Heart right ventricle (tissue), 16 donors: ENCODE measurements at regions of chr3 and their contacts with region 1.

Region 1: GRCh38 chr3:194134757-194135528 is 1.0 kb upstream of the HES1 start:
- DNase-seq: peak; percentile 93 to 96
- ATAC-seq: peak; percentile 61 to 83 (median 68)
- H3K4me3 ChIP-seq: peak overlapping the region; percentile 39 to 94 (median 69)
- H3K27ac ChIP-seq: peak overlapping the region; percentile 94 to 99 (median 96)
- H3K4me1 ChIP-seq: peaks cover 7 to 80% (median 60%) of the 10 kb centered on the region in 9 donors
- H3K27me3 ChIP-seq: peaks cover 0 to 94% (median 4%) of the 10 kb centered on the region in 7 donors
- CTCF ChIP-seq: peak in 1 of 9 donors; percentile 2

Region 2: GRCh38 chr3:193665370-193665989 is 469.5 kb before region 1 on chr3:
- intact Hi-C with region 1: loop called in 1 of 10 experiments (anchors 5 kb)
- DNase-seq: no peak
- ATAC-seq: no peak
- H3K4me3 ChIP-seq: no peak overlapping the region
- H3K27ac ChIP-seq: no peak overlapping the region
- H3K4me1 ChIP-seq: no peaks in the 10 kb centered on the region
- H3K27me3 ChIP-seq: no peaks in the 10 kb centered on the region
- CTCF ChIP-seq: peak; percentile 34 to 68 (median 54)

Region 3: DNA sequence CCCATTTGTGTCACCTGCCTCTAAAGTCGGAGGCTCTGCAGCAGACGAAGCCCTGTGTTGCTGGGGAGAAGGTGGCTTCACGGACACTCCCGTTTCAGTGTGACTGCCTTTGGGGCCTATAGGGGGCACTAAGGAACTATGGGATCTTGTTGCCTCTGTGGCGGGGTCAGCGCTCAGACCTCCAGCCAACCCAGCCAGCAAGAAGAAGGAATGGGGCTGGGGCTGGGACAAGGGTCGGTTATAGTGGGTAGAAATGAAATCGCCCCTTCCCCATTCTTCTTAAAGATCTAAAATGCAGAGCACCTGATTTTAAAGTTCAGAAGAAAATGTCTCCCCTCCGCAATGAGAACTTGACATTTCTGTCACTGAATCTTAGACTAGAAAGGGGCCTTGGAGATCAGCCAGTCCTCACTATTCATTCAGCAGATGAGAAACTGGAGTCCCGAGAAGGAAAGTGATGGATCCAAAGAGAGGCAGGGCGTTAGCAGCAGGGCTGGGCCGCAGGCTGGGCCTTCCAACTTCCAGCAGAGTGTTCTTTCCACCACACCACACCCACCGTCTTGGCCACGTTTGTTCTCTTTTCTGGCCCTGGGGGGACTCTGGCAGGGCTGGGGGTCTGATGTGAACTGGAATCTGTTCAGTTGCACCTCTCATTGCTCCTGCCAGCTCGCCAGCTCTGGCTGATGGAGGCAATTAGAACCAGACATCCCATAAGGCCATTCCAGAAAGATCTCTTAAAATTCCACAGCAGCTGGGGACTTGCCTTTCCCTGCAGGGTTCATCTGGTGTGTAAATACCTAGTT is 346.6 kb before region 1 on chr3:
- intact Hi-C with region 1: loop called in 9 of 10 experiments (anchors 2 to 5 kb)
- DNase-seq: peak; percentile 51 to 76
- ATAC-seq: peak; percentile 87 to 97 (median 95)
- H3K4me3 ChIP-seq: no peak overlapping the region
- H3K27ac ChIP-seq: peak overlapping the region in 4 of 10 donors; percentile 6 to 39 (median 16)
- H3K4me1 ChIP-seq: peaks cover 7 to 22% (median 12%) of the 10 kb centered on the region in 9 donors
- H3K27me3 ChIP-seq: peaks cover 3 to 61% (median 50%) of the 10 kb centered on the region in 7 donors
- CTCF ChIP-seq: peak; percentile 63 to 94 (median 84)

Region 4: DNA sequence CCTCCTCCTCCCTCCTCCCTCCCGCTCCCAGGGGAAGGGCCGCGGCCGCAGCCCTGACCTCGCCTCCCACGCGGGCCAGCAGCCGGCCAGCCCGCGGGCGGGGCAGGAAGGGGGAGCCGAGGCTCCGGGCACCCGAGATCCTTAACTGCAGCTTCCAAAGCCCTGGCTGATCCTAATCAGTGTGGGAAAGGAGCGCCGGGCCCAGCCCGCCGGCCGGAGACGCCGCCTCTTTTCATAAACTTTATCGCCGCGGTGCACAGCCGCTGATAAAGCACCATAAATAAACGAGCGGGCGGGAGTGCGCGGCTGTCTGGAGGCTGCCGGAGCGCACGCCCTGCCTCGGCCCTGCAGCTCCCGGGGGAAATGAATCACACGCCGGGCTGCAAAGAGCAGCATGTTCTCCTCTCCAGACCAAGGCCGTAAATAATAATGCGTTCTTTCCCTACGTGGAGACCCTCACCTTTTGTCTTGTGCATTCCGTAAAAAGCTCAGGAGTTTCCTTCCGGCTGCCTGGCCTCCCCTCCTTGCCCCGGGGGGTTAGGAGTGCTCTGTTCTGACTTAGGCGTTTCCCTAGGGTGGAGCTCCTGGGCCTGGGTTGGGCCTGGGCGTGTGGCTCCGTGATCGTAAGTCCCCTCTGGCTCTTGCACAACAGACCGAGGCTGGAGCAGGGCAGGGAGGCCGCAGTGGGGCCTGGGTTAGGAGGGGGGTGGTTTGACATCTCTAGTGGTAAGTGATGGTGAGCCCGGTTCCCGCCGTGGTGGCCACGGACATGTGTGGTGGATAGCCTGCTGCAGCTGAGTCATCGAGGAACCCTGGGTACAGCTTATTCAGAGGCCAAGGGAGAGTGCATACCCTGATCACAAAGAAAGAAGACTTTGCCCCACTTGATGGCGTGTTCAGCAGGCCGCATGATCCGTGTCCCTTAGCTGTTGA is 131.6 kb before region 1 on chr3:
- intact Hi-C with region 1: loop called in 9 of 10 experiments (anchors 1 to 10 kb)
- DNase-seq: peak; percentile 92
- ATAC-seq: peak; percentile 90 to 96 (median 94)
- H3K4me3 ChIP-seq: peak overlapping the region in 8 of 10 donors; percentile 26 to 52 (median 47)
- H3K27ac ChIP-seq: peak overlapping the region; percentile 23 to 85 (median 74)
- H3K4me1 ChIP-seq: peaks cover 13 to 48% (median 29%) of the 10 kb centered on the region in 9 donors
- H3K27me3 ChIP-seq: peaks cover 0 to 33% (median 8%) of the 10 kb centered on the region in 7 donors
- CTCF ChIP-seq: peak in 1 of 9 donors; percentile 21

Region 5: GRCh38 chr3:194070634-194071409 is 64.1 kb before region 1 on chr3:
- intact Hi-C with region 1: loop called in 7 of 10 experiments (anchors 1 to 10 kb)
- DNase-seq: peak; percentile 84 to 89
- ATAC-seq: peak; percentile 87 to 93 (median 92)
- H3K4me3 ChIP-seq: peak overlapping the region; percentile 25 to 64 (median 53)
- H3K27ac ChIP-seq: peak overlapping the region; percentile 59 to 96 (median 91)
- H3K4me1 ChIP-seq: peaks cover 0 to 32% (median 18%) of the 10 kb centered on the region in 9 donors
- H3K27me3 ChIP-seq: peaks cover 0 to 38% (median 11%) of the 10 kb centered on the region in 7 donors
- CTCF ChIP-seq: peak in 1 of 9 donors; percentile 10

Region 6: DNA sequence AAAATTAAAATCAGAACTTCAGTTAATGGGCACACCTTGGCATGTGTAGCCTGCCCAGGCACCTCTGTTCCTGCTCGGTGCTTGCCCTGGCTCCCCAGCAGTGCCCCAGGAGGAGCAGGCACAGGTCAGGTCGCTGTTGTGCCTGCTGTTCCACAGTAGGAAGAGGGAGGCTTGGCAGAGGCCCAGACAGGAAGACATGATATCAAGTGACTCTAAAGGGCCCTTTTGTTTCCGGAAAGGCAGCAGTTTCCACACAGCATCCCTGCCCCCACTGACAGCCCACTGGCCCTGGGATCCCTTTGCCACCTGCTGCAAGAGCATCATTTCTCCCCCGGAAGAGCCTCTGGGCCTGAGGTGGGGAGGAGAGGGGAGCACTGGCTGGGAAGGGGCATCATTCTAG is 39.5 kb before region 1 on chr3:
- intact Hi-C with region 1: loop called in 2 of 10 experiments (anchors 5 kb)
- DNase-seq: peak; percentile 47 to 72
- ATAC-seq: peak in 5 of 8 donors; percentile 27 to 54 (median 41)
- H3K4me3 ChIP-seq: no peak overlapping the region
- H3K27ac ChIP-seq: no peak overlapping the region
- H3K4me1 ChIP-seq: peaks cover 0 to 40% (median 31%) of the 10 kb centered on the region in 9 donors
- H3K27me3 ChIP-seq: peaks cover 0 to 17% (median 1%) of the 10 kb centered on the region in 7 donors
- CTCF ChIP-seq: no peak

Region 7: DNA sequence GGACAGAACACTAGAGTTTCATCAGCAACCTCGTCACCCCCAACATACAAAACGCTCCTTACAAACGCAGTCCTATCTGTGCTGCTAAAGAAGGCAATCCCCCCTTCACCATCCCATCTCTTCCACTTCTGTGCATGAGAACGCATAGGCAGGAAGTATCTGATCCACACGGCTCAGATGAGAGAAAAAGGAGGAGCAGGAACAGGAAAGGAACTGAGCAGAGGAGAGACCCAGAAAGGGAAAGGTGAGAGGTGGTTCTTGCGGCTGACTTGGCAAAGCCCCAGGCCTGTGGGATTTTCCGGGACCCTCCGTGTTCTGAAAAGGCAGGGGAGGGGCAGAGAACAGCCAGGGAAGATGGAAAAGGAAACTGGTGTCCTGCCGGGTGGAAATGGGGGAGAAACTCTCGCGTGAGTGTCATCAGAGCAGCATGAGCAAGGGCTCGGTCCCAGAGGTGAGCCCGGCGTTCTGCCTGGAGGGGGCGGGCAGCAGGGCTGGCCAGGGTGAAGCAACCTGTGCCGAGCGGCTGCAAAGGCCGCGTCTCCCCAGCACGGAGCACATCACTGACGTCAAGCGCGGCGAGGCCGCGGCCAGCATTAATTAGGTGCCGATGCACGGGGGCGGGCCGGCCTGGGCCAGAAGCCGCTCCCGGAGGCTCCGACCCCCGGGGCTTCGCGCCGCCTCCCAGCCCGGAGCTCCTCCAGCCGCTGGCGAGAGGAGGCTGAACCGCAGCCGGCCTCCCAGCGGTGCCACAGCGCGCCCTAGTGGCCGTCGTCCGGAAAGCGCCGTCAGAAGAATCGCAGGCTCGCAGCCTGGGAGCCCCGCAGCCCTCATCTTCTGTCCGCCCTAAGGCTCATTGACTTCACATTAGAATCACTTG is 180.4 kb after region 1 on chr3:
- intact Hi-C with region 1: loop called in 8 of 10 experiments (anchors 2 to 5 kb)
- DNase-seq: peak; percentile 85 to 89
- ATAC-seq: peak; percentile 84 to 92 (median 90)
- H3K4me3 ChIP-seq: peak overlapping the region in 9 of 10 donors; percentile 8 to 62 (median 52)
- H3K27ac ChIP-seq: peak overlapping the region in 6 of 10 donors; percentile 6 to 48 (median 34)
- H3K4me1 ChIP-seq: peaks cover 6 to 37% (median 25%) of the 10 kb centered on the region in 9 donors
- H3K27me3 ChIP-seq: peaks cover 0 to 67% (median 56%) of the 10 kb centered on the region in 7 donors
- CTCF ChIP-seq: peak; percentile 91 to 99 (median 97)